Esophagus muscularis mucosa (tissue), 4 donors: ENCODE measurements at regions of chr3 and their contacts with region 1.

Region 1: DNA sequence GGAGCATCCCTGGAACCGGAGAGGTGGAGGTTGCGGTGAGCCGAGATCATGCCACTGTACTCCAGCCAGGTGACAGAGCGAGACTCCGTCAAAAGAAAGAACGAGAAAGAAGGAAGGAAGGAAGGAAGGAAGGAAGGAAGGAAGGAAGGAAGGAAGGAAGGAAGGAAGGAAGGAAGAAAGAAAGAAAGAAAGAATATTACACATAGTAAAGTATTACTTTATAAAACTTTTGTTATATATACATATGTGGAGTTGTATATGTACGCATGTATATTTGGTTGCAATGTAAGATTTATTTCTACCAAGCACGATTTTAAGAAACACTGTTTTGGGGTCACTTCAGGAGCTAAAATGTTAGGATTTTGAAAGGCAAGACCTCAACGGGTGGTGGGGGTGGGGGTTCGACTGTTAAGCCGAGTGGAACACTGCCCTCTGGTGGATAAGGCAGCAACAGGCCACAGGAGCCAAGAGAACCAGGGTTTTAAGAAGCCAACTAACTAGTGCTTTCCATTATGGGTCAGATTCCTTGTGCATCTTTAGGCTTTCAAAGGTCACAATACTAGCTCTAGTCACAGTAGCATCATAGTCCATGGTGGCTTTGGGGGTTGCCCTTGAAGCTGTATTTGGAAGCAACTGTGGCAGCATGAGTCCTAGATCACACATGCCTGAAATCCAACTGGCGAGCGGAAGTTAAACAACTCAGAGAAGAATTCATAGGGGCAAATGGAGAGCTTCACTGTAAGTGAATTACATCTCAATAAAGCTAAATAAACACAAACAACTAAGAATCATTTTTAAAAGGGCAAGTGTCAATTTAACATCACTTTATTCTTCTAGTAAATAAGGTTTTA is 22.5 kb downstream of the GLB1 start:
- DNase-seq: no peak
- H3K4me3 ChIP-seq: no peak overlapping the region
- H3K27ac ChIP-seq: no peak overlapping the region
- H3K4me1 ChIP-seq: peaks cover 0 to 19% (median 7%) of the 10 kb centered on the region in 4 donors
- H3K27me3 ChIP-seq: no peaks in the 10 kb centered on the region
- CTCF ChIP-seq: peak; percentile 75 to 91 (median 82)
- EP300 ChIP-seq: no peak
- POLR2A ChIP-seq: no peak

Region 2: GRCh38 chr3:32593903-32594525 is 480.4 kb before region 1 on chr3:
- intact Hi-C with region 1: no loop called
- DNase-seq: no peak
- H3K4me3 ChIP-seq: no peak overlapping the region
- H3K27ac ChIP-seq: no peak overlapping the region
- H3K4me1 ChIP-seq: peaks cover 0 to 11% (median 4%) of the 10 kb centered on the region in 4 donors
- H3K27me3 ChIP-seq: no peaks in the 10 kb centered on the region
- CTCF ChIP-seq: no peak
- EP300 ChIP-seq: no peak
- POLR2A ChIP-seq: no peak

Region 3: GRCh38 chr3:32947789-32948238 is 126.6 kb before region 1 on chr3:
- intact Hi-C with region 1: loop called (anchors 5 kb)
- DNase-seq: peak; percentile 95
- H3K4me3 ChIP-seq: no peak overlapping the region
- H3K27ac ChIP-seq: no peak overlapping the region
- H3K4me1 ChIP-seq: no peaks in the 10 kb centered on the region
- H3K27me3 ChIP-seq: no peaks in the 10 kb centered on the region
- CTCF ChIP-seq: peak; percentile 56 to 64 (median 63)
- EP300 ChIP-seq: no peak
- POLR2A ChIP-seq: no peak

Region 4: DNA sequence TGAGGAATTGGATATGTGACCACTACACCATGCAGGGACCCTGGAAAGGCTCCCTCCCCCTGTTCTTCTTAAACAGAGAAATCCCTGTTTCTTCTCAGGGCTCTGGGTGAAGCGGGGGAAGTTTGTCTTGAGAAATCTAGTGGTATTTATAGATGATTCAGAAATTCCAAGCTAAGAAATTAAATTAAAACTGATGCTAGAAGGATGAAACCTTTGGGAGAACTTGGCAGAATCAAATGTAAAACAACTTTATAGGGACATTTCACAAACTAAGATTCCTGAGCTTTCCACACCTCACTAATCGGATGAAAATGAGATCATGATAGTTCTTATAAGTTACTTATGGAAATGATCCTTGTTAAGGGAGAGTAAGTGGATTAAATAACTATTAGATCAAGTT is 257.0 kb after region 1 on chr3:
- intact Hi-C with region 1: no loop called
- DNase-seq: no peak
- H3K4me3 ChIP-seq: no peak overlapping the region
- H3K27ac ChIP-seq: no peak overlapping the region
- H3K4me1 ChIP-seq: no peaks in the 10 kb centered on the region
- H3K27me3 ChIP-seq: no peaks in the 10 kb centered on the region
- CTCF ChIP-seq: no peak
- EP300 ChIP-seq: no peak
- POLR2A ChIP-seq: no peak